Pancreas (tissue), 10 donors: ENCODE measurements at regions of chr5 and their contacts with region 1.

Region 1: GRCh38 chr5:122192497-122193496 is 63.5 kb downstream of the ZNF474 start:
- DNase-seq: peak in 1 of 6 donors; percentile 35
- ATAC-seq: peak; percentile 46 to 91 (median 84)
- H3K4me3 ChIP-seq: no peak overlapping the region
- H3K27ac ChIP-seq: no peak overlapping the region
- H3K4me1 ChIP-seq: no peaks in the 10 kb centered on the region
- H3K27me3 ChIP-seq: no peaks in the 10 kb centered on the region
- CTCF ChIP-seq: peak; percentile 12 to 59 (median 40)

Region 2: GRCh38 chr5:122311961-122312590 is 119.3 kb after region 1 on chr5 and contains the start of gene SNCAIP:
- intact Hi-C with region 1: no loop called
- DNase-seq: peak; percentile 7 to 80 (median 30)
- ATAC-seq: peak; percentile 64 to 89 (median 84)
- H3K4me3 ChIP-seq: peak within 1 kb of the TSS; percentile 20 to 59 (median 40)
- H3K27ac ChIP-seq: no peak within 1 kb of the TSS
- H3K4me1 ChIP-seq: peaks cover 0 to 7% (median 0%) of the 10 kb centered on the region in 3 donors
- H3K27me3 ChIP-seq: peaks cover 0 to 25% (median 6%) of the 10 kb centered on the region in 4 donors
- CTCF ChIP-seq: no peak
- total RNA-seq, gene SNCAIP: 0.03 to 1.1 (median 0.26) TPM in 5 of 6 donors, not detected in the other

Region 3: GRCh38 chr5:122415030-122415800 is 222.4 kb after region 1 on chr5:
- intact Hi-C with region 1: loop called in 2 of 3 experiments (anchors 5 to 10 kb)
- DNase-seq: peak in 5 of 6 donors; percentile 9 to 57 (median 25)
- ATAC-seq: peak; percentile 61 to 98 (median 93)
- H3K4me3 ChIP-seq: no peak overlapping the region
- H3K27ac ChIP-seq: no peak overlapping the region
- H3K4me1 ChIP-seq: no peaks in the 10 kb centered on the region
- H3K27me3 ChIP-seq: peaks cover 0 to 4% (median 0%) of the 10 kb centered on the region in 4 donors
- CTCF ChIP-seq: peak in 3 of 4 donors; percentile 37 to 47 (median 39)